Activated B cell treated with CpG ODN at 0.5 μM for 24 hours (primary cell): ENCODE measurements at regions of chr16 and their contacts with region 1.

Region 1: GRCh38 chr16:4766874-4767628 is at the start of gene ZNF500:
- DNase-seq: peak; percentile 97
- ATAC-seq: peak; percentile 91
- H3K4me3 Mint-ChIP-seq: peak within 1 kb of the TSS; percentile 93
- H3K27ac Mint-ChIP-seq: peak within 1 kb of the TSS; percentile 91
- H3K4me1 Mint-ChIP-seq: peaks cover 24% of the 10 kb centered on the region
- H3K27me3 Mint-ChIP-seq: no peaks in the 10 kb centered on the region
- CTCF ChIP-seq: no peak
- total RNA-seq, gene ZNF500: 14.3 and 19.1 TPM in 2 replicates

Region 2: DNA sequence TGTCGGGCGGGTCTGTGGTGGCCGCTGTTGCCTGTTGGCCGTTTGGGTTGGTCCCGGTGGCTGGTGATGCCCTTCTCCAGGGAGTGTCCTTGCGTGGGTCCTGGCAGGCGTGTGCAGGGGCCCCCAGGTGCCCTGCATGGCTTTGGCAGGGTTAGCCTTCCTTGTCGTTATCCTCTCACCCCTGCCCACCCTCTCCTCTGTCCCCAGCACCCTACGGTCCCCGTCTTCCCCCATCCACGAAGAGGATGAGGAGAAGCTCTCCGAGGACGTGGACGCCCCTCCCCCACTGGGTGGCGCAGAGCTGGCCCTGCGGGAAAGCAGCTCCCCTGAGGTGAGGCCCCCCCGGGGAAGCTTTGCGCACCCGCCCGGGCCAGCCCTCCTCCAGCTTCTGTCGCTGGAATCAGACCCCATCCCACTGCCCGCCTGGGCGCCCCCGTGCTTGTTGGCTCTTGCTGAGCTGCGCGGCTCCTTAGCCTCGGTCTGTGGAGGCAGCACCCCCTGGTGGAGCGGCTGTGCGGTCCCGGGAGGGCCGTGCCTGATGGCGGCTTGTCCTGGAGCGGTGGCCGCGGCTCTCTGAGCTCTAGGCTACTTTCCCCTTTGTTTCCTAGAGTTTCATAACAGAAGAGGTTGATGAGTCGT is 84.3 kb before region 1 on chr16:
- CTCF ChIA-PET with region 1: no interaction called
- POLR2A ChIA-PET with region 1: no interaction called
- intact Hi-C with region 1: no loop called
- DNase-seq: no peak
- ATAC-seq: no peak
- H3K4me3 Mint-ChIP-seq: no peak overlapping the region
- H3K27ac Mint-ChIP-seq: no peak overlapping the region
- H3K4me1 Mint-ChIP-seq: no peaks in the 10 kb centered on the region
- H3K27me3 Mint-ChIP-seq: no peaks in the 10 kb centered on the region
- CTCF ChIP-seq: no peak

Region 3: DNA sequence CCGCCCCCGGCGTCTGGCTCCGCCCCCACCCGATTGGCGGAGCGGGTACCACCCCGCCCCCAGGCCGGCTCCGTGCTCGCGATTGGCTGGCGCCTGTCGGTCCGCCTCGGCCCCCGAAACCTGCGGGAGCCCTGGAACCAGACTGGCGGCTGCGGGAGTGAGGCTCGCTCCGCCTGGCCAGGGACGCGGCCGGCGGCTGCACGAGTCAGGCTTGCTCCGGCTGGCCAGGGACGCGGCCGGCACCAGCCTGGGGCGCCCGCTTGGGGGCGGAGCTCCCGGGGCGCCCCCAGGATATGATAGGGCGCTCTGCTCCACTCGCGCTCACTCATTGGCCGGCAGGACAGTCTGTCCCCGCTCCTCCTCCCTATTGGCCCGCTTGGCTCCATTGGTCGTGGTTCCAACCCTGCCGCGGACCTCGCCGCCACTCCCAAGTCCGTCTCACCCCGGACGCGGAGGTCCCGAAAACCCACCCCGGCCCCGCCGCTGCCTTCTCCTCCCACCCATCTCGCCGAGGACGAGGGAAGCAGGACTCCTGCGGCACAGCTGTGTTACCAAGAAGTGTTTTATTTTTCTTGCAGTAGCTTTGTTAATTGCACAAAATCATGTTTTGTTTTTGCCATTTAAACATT is 35.7 kb after region 1 on chr16:
- CTCF ChIA-PET with region 1: no interaction called
- POLR2A ChIA-PET with region 1: interaction called, 16 read pairs
- intact Hi-C with region 1: loop called (anchors 1 kb)
- DNase-seq: peak; percentile 97
- ATAC-seq: peak; percentile 88
- H3K4me3 Mint-ChIP-seq: peak overlapping the region; percentile 86
- H3K27ac Mint-ChIP-seq: peak overlapping the region; percentile 69
- H3K4me1 Mint-ChIP-seq: peaks cover 25% of the 10 kb centered on the region
- H3K27me3 Mint-ChIP-seq: no peaks in the 10 kb centered on the region
- CTCF ChIP-seq: no peak

Region 4: GRCh38 chr16:5056352-5056751 is 289.3 kb after region 1 on chr16:
- CTCF ChIA-PET with region 1: no interaction called
- POLR2A ChIA-PET with region 1: interaction called, 11 read pairs
- intact Hi-C with region 1: no loop called
- DNase-seq: peak; percentile 20
- ATAC-seq: peak; percentile 77
- H3K4me3 Mint-ChIP-seq: no peak overlapping the region
- H3K27ac Mint-ChIP-seq: no peak overlapping the region
- H3K4me1 Mint-ChIP-seq: no peaks in the 10 kb centered on the region
- H3K27me3 Mint-ChIP-seq: peaks cover 3% of the 10 kb centered on the region
- CTCF ChIP-seq: no peak